ENCODE measurements at regions of chr17 and their contacts with region 1.

Region 1: DNA sequence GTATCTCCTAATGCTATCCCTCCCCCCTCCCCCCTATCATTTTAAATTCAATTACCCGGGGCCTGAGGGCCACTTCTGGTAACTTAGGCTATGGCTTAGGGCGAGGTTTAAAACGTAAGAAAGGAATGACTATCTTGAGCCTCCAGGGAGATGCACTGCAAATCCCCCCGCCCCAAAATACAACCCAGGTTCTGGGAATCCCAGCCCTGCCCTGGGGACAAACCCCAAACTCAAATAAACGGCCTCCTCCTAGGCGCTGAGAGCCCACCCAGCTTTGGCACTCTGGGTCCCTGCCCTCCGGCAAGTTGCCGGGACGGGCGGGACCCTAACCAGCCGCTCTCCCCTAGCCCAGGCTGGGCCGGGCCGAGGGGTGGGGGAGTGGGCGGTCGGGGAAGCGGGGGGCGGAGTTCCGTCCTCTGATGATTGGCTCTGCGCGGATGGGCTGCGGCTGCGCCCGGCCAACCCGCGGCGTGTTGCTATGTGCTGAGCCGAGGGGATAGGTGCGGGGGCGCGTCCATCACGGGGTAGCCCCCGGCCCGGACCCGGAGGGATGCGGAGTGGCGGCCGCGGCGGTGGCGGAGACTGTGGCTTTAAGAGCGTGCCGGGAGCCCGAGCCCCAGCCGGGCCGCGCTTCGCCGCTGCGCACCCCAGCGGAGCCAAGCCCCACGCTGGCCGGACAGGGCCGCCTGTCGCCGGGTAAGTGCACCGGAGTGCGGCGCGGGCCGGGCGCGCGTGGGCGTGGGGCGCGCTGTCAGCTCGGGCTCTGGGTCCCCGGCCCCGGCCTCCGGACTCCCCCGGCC is at the start of gene YPEL2:
- DNase-seq: peak; percentile 98
- H3K4me3 ChIP-seq: peak within 1 kb of the TSS; percentile 76 to 97 (median 95)
- H3K27ac ChIP-seq: peak within 1 kb of the TSS; percentile 93 to 98 (median 96)
- H3K4me1 ChIP-seq: peaks cover 0 to 63% (median 56%) of the 10 kb centered on the region in 4 donors
- H3K27me3 ChIP-seq: no peaks in the 10 kb centered on the region
- CTCF ChIP-seq: no peak
- EP300 ChIP-seq: no peak
- POLR2A ChIP-seq: peak; percentile 33 to 37
- total RNA-seq, gene YPEL2: 25.8 to 35.7 (median 33.5) TPM

Region 2: GRCh38 chr17:59366773-59367657 is 35.7 kb after region 1 on chr17:
- intact Hi-C with region 1: loop called (anchors 5 kb)
- DNase-seq: peak; percentile 74
- H3K4me3 ChIP-seq: peak overlapping the region in 2 of 4 donors; percentile 4 to 6
- H3K27ac ChIP-seq: peak overlapping the region; percentile 87 to 95 (median 92)
- H3K4me1 ChIP-seq: peaks cover 0 to 99% (median 97%) of the 10 kb centered on the region in 4 donors
- H3K27me3 ChIP-seq: no peaks in the 10 kb centered on the region
- CTCF ChIP-seq: no peak
- EP300 ChIP-seq: no peak
- POLR2A ChIP-seq: no peak

Region 3: GRCh38 chr17:59427425-59427921 is 96.1 kb after region 1 on chr17:
- intact Hi-C with region 1: loop called (anchors 5 kb)
- DNase-seq: no peak
- H3K4me3 ChIP-seq: no peak overlapping the region
- H3K27ac ChIP-seq: peak overlapping the region; percentile 76 to 90 (median 85)
- H3K4me1 ChIP-seq: peaks cover 0 to 70% (median 67%) of the 10 kb centered on the region in 4 donors
- H3K27me3 ChIP-seq: no peaks in the 10 kb centered on the region
- CTCF ChIP-seq: no peak
- EP300 ChIP-seq: no peak
- POLR2A ChIP-seq: no peak

Region 4: GRCh38 chr17:59440784-59441441 is 109.6 kb after region 1 on chr17:
- intact Hi-C with region 1: loop called (anchors 1 kb)
- DNase-seq: peak; percentile 96
- H3K4me3 ChIP-seq: peak overlapping the region in 1 of 4 donors; percentile 15
- H3K27ac ChIP-seq: peak overlapping the region; percentile 58 to 80 (median 76)
- H3K4me1 ChIP-seq: peaks cover 0 to 21% (median 16%) of the 10 kb centered on the region in 4 donors
- H3K27me3 ChIP-seq: no peaks in the 10 kb centered on the region
- CTCF ChIP-seq: peak; percentile 79 to 91 (median 89)
- EP300 ChIP-seq: no peak
- POLR2A ChIP-seq: no peak

Region 5: GRCh38 chr17:59619293-59620063 is 288.1 kb after region 1 on chr17 and contains the start of gene CLTC:
- intact Hi-C with region 1: loop called (anchors 5 kb)
- DNase-seq: peak; percentile 97
- H3K4me3 ChIP-seq: peak within 1 kb of the TSS; percentile 72 to 85 (median 85)
- H3K27ac ChIP-seq: peak within 1 kb of the TSS; percentile 95 to 98 (median 96)
- H3K4me1 ChIP-seq: peaks cover 0 to 50% (median 45%) of the 10 kb centered on the region in 4 donors
- H3K27me3 ChIP-seq: no peaks in the 10 kb centered on the region
- CTCF ChIP-seq: no peak
- EP300 ChIP-seq: peak; percentile 19 to 66 (median 54)
- POLR2A ChIP-seq: peak; percentile 90 to 93
- total RNA-seq, gene CLTC: 206 to 236 (median 214) TPM

Measured in sigmoid colon (tissue), 7 donors.